ENCODE measurements at regions of chr3 and their contacts with region 1.

Region 1: GRCh38 chr3:31762097-31762764 is 218.8 kb downstream of the OSBPL10 start:
- DNase-seq: no peak
- ATAC-seq: peak; percentile 83

Region 2: GRCh38 chr3:31550452-31551251 is 211.6 kb before region 1 on chr3:
- intact Hi-C with region 1: loop called (anchors 5 kb)
- DNase-seq: no peak
- ATAC-seq: peak; percentile 64

Measured in left ventricle myocardium superior (tissue), 1 donor.